Endothelial cell of umbilical vein (primary cell): ENCODE measurements at regions of chr11 and their contacts with region 1.

Region 1: GRCh38 chr11:59753650-59754493 is 1.3 kb upstream of the STX3 start:
- DNase-seq: peak; percentile 82
- H3K4me3 ChIP-seq: peak overlapping the region; percentile 65 to 87 (median 83)
- H3K27ac ChIP-seq: peak overlapping the region; percentile 72
- H3K4me1 ChIP-seq: peaks cover 21% of the 10 kb centered on the region
- H3K27me3 ChIP-seq: no peaks in the 10 kb centered on the region
- CTCF ChIP-seq: peak; percentile 82 to 89
- POLR2A ChIP-seq: no peak

Region 2: DNA sequence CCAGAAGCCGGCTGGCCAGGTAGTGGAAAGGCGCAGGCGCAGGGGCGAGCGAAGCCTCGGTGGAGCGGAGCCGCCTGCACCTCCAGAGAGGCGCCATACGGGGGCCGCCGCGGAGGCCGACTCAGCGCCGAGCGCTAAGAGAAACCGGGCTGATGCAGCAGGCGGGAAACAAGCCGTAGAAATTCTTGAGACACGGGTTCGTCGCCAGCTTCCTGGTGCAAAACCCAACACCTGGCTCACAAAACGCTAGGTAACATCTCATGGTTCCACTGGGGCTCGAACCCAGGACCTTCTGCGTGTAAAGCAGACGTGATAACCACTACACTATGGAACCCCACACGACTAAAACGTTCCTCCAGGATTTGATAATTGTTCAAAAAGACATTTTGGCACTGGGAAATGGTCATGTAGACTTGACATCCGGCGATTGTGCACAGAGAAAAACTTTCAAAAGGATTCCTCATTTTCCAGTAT is 203.5 kb before region 1 on chr11:
- CTCF ChIA-PET with region 1: no interaction called
- POLR2A ChIA-PET with region 1: no interaction called
- dilution Hi-C with region 1: no loop called
- intact Hi-C with region 1: loop called (anchors 2 kb)
- DNase-seq: peak; percentile 96
- H3K4me3 ChIP-seq: peak overlapping the region; percentile 25 to 88 (median 50)
- H3K27ac ChIP-seq: peak overlapping the region; percentile 88
- H3K4me1 ChIP-seq: peaks cover 21% of the 10 kb centered on the region
- H3K27me3 ChIP-seq: no peaks in the 10 kb centered on the region
- CTCF ChIP-seq: peak; percentile 24 to 60
- POLR2A ChIP-seq: no peak

Region 3: GRCh38 chr11:59706518-59707285 is 47.2 kb before region 1 on chr11:
- CTCF ChIA-PET with region 1: interaction called, 7 read pairs
- POLR2A ChIA-PET with region 1: no interaction called
- dilution Hi-C with region 1: no loop called
- intact Hi-C with region 1: loop called (anchors 1 kb)
- DNase-seq: peak; percentile 95
- H3K4me3 ChIP-seq: no peak overlapping the region
- H3K27ac ChIP-seq: peak overlapping the region; percentile 93
- H3K4me1 ChIP-seq: peaks cover 18% of the 10 kb centered on the region
- H3K27me3 ChIP-seq: no peaks in the 10 kb centered on the region
- CTCF ChIP-seq: no peak
- POLR2A ChIP-seq: peak; percentile 86

Region 4: GRCh38 chr11:59776210-59777066 is 22.6 kb after region 1 on chr11:
- CTCF ChIA-PET with region 1: interaction called, 19 read pairs
- POLR2A ChIA-PET with region 1: interaction called, 4 read pairs
- dilution Hi-C with region 1: no loop called
- intact Hi-C with region 1: no loop called
- DNase-seq: peak; percentile 88
- H3K4me3 ChIP-seq: no peak overlapping the region
- H3K27ac ChIP-seq: peak overlapping the region; percentile 31
- H3K4me1 ChIP-seq: peaks cover 31% of the 10 kb centered on the region
- H3K27me3 ChIP-seq: no peaks in the 10 kb centered on the region
- CTCF ChIP-seq: no peak
- POLR2A ChIP-seq: no peak

Region 5: DNA sequence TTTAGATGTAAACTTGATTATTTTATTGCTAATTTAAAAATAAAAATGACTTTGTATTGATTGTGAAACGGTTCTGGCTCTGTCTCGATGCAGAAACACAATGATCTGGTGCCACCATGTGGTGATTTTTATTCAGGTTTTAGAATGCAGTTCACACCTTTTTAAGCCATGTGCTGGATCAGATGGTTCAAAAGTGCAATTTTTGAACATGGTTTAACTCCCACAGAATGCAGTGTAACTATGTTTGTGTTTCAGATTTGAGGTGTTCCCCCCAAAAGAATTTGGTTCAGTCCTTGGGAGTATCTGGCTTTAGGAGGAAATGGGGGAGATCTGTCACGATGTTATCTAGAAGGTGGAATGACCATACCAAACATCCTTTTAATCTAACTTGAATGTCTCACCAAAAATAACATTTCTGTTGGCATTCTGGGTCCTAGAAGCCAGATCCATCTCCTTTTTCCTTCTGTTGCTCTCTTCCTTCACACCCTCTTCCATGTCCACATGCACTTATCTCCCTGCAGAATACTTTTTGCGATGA is 48.8 kb after region 1 on chr11:
- CTCF ChIA-PET with region 1: interaction called, 120 read pairs
- POLR2A ChIA-PET with region 1: interaction called, 4 read pairs
- dilution Hi-C with region 1: no loop called
- intact Hi-C with region 1: loop called (anchors 1 kb)
- DNase-seq: peak; percentile 79
- H3K4me3 ChIP-seq: no peak overlapping the region
- H3K27ac ChIP-seq: peak overlapping the region; percentile 83
- H3K4me1 ChIP-seq: peaks cover 9% of the 10 kb centered on the region
- H3K27me3 ChIP-seq: no peaks in the 10 kb centered on the region
- CTCF ChIP-seq: peak; percentile 34 to 47
- POLR2A ChIP-seq: no peak

Region 6: GRCh38 chr11:59901306-59901705 is 147.4 kb after region 1 on chr11:
- CTCF ChIA-PET with region 1: no interaction called
- POLR2A ChIA-PET with region 1: no interaction called
- dilution Hi-C with region 1: no loop called
- intact Hi-C with region 1: loop called (anchors 5 kb)
- DNase-seq: peak; percentile 98
- H3K4me3 ChIP-seq: peak overlapping the region in 1 of 3 experiments; percentile 38
- H3K27ac ChIP-seq: peak overlapping the region; percentile 95
- H3K4me1 ChIP-seq: peaks cover 15% of the 10 kb centered on the region
- H3K27me3 ChIP-seq: no peaks in the 10 kb centered on the region
- CTCF ChIP-seq: no peak
- POLR2A ChIP-seq: no peak

Region 7: DNA sequence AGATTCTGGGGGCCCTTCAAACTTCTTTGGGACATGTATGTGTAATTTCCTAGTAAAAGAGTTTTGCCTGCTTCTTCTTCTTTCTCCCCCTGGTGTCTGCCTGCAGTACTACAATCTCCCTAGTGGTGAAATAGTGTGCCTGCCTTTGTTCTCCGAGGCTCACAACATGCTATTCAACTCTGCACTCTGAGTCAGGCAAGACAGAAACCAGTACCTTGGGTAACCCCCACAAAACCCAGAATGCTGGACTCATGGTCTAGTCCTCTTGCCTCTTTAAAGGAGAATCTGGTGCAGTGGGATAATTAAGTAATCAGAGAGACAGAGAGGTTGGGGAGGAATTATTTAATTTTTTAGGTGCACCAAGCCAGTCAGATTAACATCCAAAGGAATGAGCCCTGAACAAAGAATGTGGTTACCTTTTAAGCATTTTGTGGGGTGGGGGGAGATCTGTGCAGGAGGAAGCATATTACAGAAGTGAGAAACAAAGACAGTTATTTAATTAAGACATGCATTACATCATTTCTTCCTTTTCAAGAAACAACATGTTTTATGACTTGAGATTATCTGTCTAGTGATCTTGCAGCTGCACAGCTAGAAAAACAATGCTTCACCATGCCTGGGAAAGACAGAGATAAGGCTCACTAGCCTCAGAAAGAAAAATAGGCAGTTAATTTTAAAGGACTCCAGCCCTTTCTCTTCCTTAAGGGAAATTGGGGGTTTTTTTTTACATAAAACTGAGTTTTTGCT is 440.0 kb after region 1 on chr11:
- CTCF ChIA-PET with region 1: no interaction called
- POLR2A ChIA-PET with region 1: no interaction called
- dilution Hi-C with region 1: no loop called
- intact Hi-C with region 1: loop called (anchors 1 kb)
- DNase-seq: peak; percentile 98
- H3K4me3 ChIP-seq: no peak overlapping the region
- H3K27ac ChIP-seq: peak overlapping the region; percentile 92
- H3K4me1 ChIP-seq: peaks cover 37% of the 10 kb centered on the region
- H3K27me3 ChIP-seq: no peaks in the 10 kb centered on the region
- CTCF ChIP-seq: peak; percentile 97
- POLR2A ChIP-seq: peak; percentile 21